ENCODE measurements at regions of chr12 and their contacts with region 1.

Region 1: GRCh38 chr12:14384783-14385638 is 19.5 kb downstream of the ATF7IP start:
- DNase-seq: peak; percentile 88
- ATAC-seq: peak; percentile 97
- H3K4me3 Mint-ChIP-seq: peak overlapping the region; percentile 86
- H3K27ac Mint-ChIP-seq: peak overlapping the region; percentile 91
- H3K4me1 Mint-ChIP-seq: peaks cover 59% of the 10 kb centered on the region
- H3K27me3 Mint-ChIP-seq: no peaks in the 10 kb centered on the region

Region 2: DNA sequence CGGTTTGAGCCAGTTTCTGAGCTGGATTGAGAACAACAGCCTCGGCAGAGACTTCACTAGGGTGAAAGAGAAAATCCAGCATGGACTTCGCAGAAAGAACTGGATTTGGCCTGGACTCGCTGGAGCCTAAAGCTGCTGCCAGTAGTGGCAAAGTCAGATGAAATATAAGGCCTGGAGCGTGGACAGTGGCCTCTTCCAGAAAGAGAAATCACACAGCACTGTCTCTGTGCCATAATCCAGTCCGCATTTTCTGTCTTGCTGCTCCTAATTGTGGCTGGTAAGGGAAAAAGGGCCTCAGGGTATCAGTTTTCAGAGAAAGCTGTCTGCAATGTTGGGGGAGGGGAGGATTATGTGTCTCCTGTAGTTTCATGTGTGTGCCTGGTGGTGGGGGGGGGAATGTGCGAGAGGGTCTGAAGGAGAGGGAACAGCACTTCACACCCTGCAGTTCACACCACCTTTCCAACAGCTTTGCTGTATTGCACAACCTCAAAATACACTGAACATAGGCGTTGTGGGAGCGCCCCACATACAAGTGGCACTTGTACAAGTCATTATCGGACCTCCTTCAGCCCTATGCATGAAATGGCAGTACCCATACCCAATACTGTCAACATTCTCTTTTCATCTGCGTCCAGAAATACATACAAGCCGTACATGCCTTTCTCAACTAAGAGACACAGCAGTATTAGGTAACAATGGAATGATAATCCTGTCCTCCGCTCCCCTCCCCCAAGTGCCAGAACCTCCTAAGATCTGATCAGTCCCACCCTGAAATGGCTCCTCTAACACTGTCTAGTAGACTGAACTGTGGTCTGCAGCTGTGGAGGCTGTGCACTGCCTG is 127.1 kb before region 1 on chr12:
- CTCF ChIA-PET with region 1: interaction called, 9 read pairs
- POLR2A ChIA-PET with region 1: interaction called, 20 read pairs
- DNase-seq: peak; percentile 87
- ATAC-seq: peak; percentile 67
- H3K4me3 Mint-ChIP-seq: peak overlapping the region; percentile 29
- H3K27ac Mint-ChIP-seq: peak overlapping the region; percentile 99
- H3K4me1 Mint-ChIP-seq: peaks cover 54% of the 10 kb centered on the region
- H3K27me3 Mint-ChIP-seq: no peaks in the 10 kb centered on the region

Region 3: GRCh38 chr12:14365294-14366208 is 19.5 kb before region 1 on chr12 and contains the start of gene ATF7IP:
- CTCF ChIA-PET with region 1: interaction called, 77 read pairs
- POLR2A ChIA-PET with region 1: interaction called, 73 read pairs
- DNase-seq: peak; percentile 98
- ATAC-seq: peak; percentile 89
- H3K4me3 Mint-ChIP-seq: peak within 1 kb of the TSS; percentile 82
- H3K27ac Mint-ChIP-seq: peak within 1 kb of the TSS; percentile 96
- H3K4me1 Mint-ChIP-seq: peaks cover 28% of the 10 kb centered on the region
- H3K27me3 Mint-ChIP-seq: no peaks in the 10 kb centered on the region
- total RNA-seq, gene ATF7IP: 99.8 to 104 TPM

Region 4: GRCh38 chr12:14373217-14373616 is 11.8 kb before region 1 on chr12:
- CTCF ChIA-PET with region 1: interaction called, 49 read pairs
- POLR2A ChIA-PET with region 1: interaction called, 27 read pairs
- DNase-seq: no peak
- ATAC-seq: peak; percentile 43
- H3K4me3 Mint-ChIP-seq: peak overlapping the region; percentile 35
- H3K27ac Mint-ChIP-seq: peak overlapping the region; percentile 60
- H3K4me1 Mint-ChIP-seq: peaks cover 52% of the 10 kb centered on the region
- H3K27me3 Mint-ChIP-seq: no peaks in the 10 kb centered on the region

Region 5: DNA sequence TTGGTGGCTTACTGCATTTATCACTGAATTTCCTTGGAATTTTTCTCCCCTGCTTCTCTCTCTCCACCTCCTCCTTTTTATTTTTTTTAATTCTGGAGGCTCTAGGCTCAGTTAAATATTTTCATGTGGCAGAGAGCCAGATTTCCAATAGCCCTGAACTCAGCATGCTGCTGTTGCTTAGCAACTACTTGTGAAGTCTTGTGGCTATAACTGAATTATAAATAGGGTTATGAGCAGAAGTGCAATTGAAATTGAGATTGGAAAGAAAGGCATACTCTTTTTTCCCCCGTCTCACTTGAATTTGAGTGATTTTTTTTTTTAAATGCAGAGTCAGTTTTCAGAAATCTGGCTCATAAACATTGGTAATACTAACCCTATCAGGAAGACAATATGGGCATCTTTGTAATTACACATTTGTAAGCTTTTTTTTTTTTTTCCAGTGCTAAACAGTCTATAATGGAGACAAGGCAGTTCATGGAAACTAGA is 18.7 kb after region 1 on chr12:
- CTCF ChIA-PET with region 1: interaction called, 5 read pairs
- POLR2A ChIA-PET with region 1: interaction called, 11 read pairs
- DNase-seq: no peak
- ATAC-seq: peak; percentile 62
- H3K4me3 Mint-ChIP-seq: peak overlapping the region; percentile 38
- H3K27ac Mint-ChIP-seq: peak overlapping the region; percentile 75
- H3K4me1 Mint-ChIP-seq: peaks cover 72% of the 10 kb centered on the region
- H3K27me3 Mint-ChIP-seq: no peaks in the 10 kb centered on the region

Region 6: GRCh38 chr12:14417715-14418114 is 32.7 kb after region 1 on chr12:
- CTCF ChIA-PET with region 1: interaction called, 27 read pairs
- POLR2A ChIA-PET with region 1: interaction called, 10 read pairs
- DNase-seq: peak; percentile 85
- ATAC-seq: peak; percentile 76
- H3K4me3 Mint-ChIP-seq: peak overlapping the region; percentile 72
- H3K27ac Mint-ChIP-seq: peak overlapping the region; percentile 91
- H3K4me1 Mint-ChIP-seq: peaks cover 60% of the 10 kb centered on the region
- H3K27me3 Mint-ChIP-seq: no peaks in the 10 kb centered on the region

Region 7: GRCh38 chr12:14454098-14454907 is 69.3 kb after region 1 on chr12:
- CTCF ChIA-PET with region 1: interaction called, 35 read pairs
- POLR2A ChIA-PET with region 1: no interaction called
- DNase-seq: peak; percentile 59
- ATAC-seq: peak; percentile 84
- H3K4me3 Mint-ChIP-seq: no peak overlapping the region
- H3K27ac Mint-ChIP-seq: peak overlapping the region; percentile 74
- H3K4me1 Mint-ChIP-seq: peaks cover 42% of the 10 kb centered on the region
- H3K27me3 Mint-ChIP-seq: no peaks in the 10 kb centered on the region

Measured in activated CD8-positive, alpha-beta T cell treated with anti-CD3 and anti-CD28 coated beads, Interleukin-2, amount 10 ng/mL, durations not matched to agents 7 days and 5 days (primary cell).